Heart left ventricle (tissue), 16 donors: ENCODE measurements at regions of chr5 and their contacts with region 1.

Region 1: GRCh38 chr5:54249210-54250028 is 61.0 kb downstream of the ARL15 start:
- DNase-seq: peak in 3 of 5 donors; percentile 31 to 56 (median 52)
- ATAC-seq: peak in 1 of 4 donors; percentile 29
- H3K4me3 ChIP-seq: no peak overlapping the region
- H3K27ac ChIP-seq: peak overlapping the region in 1 of 12 donors; percentile 3
- H3K4me1 ChIP-seq: peaks cover 0 to 57% (median 28%) of the 10 kb centered on the region in 12 donors
- H3K27me3 ChIP-seq: no peaks in the 10 kb centered on the region
- CTCF ChIP-seq: no peak
- POLR2A ChIP-seq: no peak

Region 2: DNA sequence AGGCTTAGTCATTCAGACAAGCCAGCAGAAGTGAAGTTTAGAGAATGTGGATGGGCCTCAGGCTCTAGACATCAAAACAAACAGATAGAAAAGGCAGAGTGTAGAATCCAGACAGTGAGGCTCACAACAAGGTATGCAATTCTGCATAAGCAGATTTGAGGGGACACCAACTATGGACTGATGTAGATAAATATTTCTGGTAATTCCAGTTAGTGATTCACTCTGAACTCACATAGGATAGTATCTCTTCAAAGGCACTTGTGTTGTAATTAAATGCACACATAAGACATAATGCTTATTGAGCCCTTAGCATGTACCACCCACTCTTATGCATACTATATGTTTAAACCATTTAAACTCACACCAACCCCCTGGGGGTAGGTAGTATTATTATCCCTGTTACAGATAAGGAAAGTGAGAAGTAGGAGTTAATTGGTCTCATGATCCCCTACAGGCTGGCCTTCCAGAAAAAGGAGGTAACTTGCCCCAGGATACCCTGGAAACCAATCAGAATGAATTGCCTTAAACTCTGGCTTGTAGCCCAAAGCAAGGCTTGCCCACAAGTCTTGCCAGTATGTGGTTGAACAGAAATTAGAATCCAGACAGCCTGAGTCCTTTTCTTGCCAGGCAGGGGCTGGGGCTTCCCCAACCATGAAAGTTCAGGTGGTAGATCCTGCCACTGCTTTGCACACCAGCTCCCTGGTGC is 166.6 kb after region 1 on chr5:
- intact Hi-C with region 1: loop called in 8 of 10 experiments (anchors 2 to 5 kb)
- DNase-seq: no peak
- ATAC-seq: no peak
- H3K4me3 ChIP-seq: no peak overlapping the region
- H3K27ac ChIP-seq: no peak overlapping the region
- H3K4me1 ChIP-seq: peaks cover 0 to 8% (median 0%) of the 10 kb centered on the region in 12 donors
- H3K27me3 ChIP-seq: no peaks in the 10 kb centered on the region
- CTCF ChIP-seq: no peak
- POLR2A ChIP-seq: no peak

Region 3: GRCh38 chr5:54421976-54422375 is 172.6 kb after region 1 on chr5:
- intact Hi-C with region 1: loop called in 9 of 10 experiments (anchors 2 to 5 kb)
- DNase-seq: no peak
- ATAC-seq: no peak
- H3K4me3 ChIP-seq: no peak overlapping the region
- H3K27ac ChIP-seq: no peak overlapping the region
- H3K4me1 ChIP-seq: peaks cover 0 to 8% (median 0%) of the 10 kb centered on the region in 12 donors
- H3K27me3 ChIP-seq: no peaks in the 10 kb centered on the region
- CTCF ChIP-seq: no peak
- POLR2A ChIP-seq: no peak

Region 4: GRCh38 chr5:54480296-54480695 is 230.9 kb after region 1 on chr5:
- intact Hi-C with region 1: loop called in 2 of 10 experiments (anchors 5 kb)
- DNase-seq: no peak
- ATAC-seq: no peak
- H3K4me3 ChIP-seq: no peak overlapping the region
- H3K27ac ChIP-seq: no peak overlapping the region
- H3K4me1 ChIP-seq: peaks cover 0 to 2% (median 0%) of the 10 kb centered on the region in 12 donors
- H3K27me3 ChIP-seq: no peaks in the 10 kb centered on the region
- CTCF ChIP-seq: no peak
- POLR2A ChIP-seq: no peak

Region 5: DNA sequence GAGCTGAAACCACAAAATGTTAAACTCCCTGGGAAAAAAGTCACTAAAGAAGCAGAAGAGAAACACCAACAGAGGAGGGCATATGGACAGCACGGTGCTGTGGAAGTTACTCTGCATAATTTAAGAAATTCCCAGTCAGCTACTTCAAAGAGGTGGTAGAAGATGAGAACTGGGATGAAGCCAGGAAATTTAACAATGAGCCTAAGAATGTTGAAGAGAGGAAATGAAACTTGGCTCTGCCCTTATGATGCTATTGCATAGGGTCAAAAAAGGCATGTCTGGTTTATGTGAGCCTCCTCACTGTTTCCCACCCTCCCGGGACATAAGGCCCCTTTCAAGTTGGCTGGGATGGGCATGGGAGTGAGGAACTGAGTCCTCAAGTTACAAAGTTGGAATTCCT is 242.8 kb after region 1 on chr5:
- intact Hi-C with region 1: loop called in 7 of 10 experiments (anchors 2 to 5 kb)
- DNase-seq: no peak
- ATAC-seq: peak in 1 of 4 donors; percentile 27
- H3K4me3 ChIP-seq: no peak overlapping the region
- H3K27ac ChIP-seq: no peak overlapping the region
- H3K4me1 ChIP-seq: peaks cover 0 to 7% (median 0%) of the 10 kb centered on the region in 12 donors
- H3K27me3 ChIP-seq: no peaks in the 10 kb centered on the region
- CTCF ChIP-seq: no peak
- POLR2A ChIP-seq: no peak

Region 6: DNA sequence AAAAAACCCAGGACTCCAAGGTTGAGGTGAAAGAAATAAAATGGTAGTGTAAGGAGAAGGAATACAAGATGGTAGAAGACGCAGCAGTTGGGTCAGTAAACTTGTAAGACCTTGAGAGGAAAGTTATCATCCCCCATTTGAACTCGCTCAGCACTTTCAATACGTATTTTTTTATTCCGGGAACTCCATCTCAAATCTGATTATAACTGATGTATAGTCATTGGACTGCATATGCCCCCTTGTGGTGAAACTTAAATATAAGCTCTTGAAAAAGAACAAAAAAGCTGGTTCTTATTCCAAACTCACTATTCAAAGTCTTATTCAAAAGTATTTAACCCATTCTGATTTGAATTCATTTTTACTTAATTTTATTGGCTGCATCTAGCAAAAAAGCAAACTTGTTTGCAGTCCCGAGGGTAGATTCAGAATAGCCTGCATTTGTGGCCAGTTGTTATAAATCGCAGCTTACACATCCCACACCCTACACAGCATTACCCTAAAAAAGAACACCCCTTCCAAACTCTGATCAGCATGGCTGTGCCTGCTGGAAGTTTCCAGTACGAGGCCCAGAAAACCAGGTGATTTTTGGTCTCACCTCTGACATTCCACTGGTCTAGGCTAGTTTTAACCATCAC is 618.0 kb after region 1 on chr5:
- intact Hi-C with region 1: loop called in 2 of 10 experiments (anchors 10 kb)
- DNase-seq: no peak
- ATAC-seq: peak in 2 of 4 donors; percentile 36 to 45
- H3K4me3 ChIP-seq: peak overlapping the region in 7 of 12 donors; percentile 4 to 46 (median 19)
- H3K27ac ChIP-seq: no peak overlapping the region
- H3K4me1 ChIP-seq: peaks cover 0 to 7% (median 0%) of the 10 kb centered on the region in 12 donors
- H3K27me3 ChIP-seq: no peaks in the 10 kb centered on the region
- CTCF ChIP-seq: peak; percentile 58 to 78 (median 74)
- POLR2A ChIP-seq: no peak